Dendritic cell treated with granulocyte-macrophage colony-stimulating factor and Interleukin-4, amounts not matched to agents 40 ng/mL and 50 ng/mL, for 4 days (primary cell): ENCODE measurements at regions of chr19 and their contacts with region 1.

Region 1: DNA sequence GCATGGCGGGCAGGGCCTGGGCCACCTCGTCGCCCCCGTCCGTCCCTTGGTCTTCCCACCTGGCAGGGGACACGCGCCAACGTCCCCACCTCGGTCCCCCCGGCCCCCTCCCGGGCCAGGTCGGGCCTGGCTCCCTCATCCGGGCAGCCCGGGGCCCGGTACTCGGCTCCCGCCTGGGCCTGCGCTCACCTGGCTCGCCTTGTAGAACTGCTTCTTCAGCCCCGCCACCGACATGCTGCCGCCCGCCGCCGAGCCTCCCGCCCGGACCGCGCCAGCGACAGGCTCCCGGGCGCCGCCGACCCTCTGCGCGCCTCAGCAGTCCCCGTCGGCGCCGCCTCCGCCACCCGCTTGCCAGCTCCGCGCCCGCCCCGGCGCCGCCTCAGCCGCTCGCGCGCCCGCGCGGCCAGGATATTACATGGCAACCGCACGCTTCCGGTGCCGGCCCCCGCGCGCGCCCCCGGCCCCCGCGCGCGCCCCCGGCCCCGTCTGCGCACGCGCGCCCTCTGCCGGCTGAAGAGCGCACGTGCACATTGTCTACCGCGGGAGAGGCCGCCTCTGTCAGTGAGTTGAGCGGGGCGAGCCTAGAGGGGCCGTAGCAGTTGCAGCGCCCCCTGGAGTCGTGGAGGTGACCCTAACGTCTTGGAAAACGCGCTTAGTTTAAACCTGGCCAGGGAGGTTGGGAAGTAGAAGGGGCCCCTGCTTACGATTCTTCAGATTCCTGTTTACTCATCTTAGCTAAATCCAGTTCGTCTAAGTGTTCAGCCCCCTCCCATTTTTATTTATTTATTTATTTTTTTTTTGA is at the start of gene SH3GL1:
- H3K4me3 Mint-ChIP-seq: peak within 1 kb of the TSS; percentile 96
- H3K27ac Mint-ChIP-seq: peak within 1 kb of the TSS; percentile 93
- H3K4me1 Mint-ChIP-seq: peaks cover 63% of the 10 kb centered on the region
- H3K27me3 Mint-ChIP-seq: no peaks in the 10 kb centered on the region

Region 2: GRCh38 chr19:4369888-4370260 is 30.5 kb before region 1 on chr19:
- intact Hi-C with region 1: loop called (anchors 1 kb)
- H3K4me3 Mint-ChIP-seq: peak overlapping the region; percentile 67
- H3K27ac Mint-ChIP-seq: peak overlapping the region; percentile 91
- H3K4me1 Mint-ChIP-seq: peaks cover 93% of the 10 kb centered on the region
- H3K27me3 Mint-ChIP-seq: no peaks in the 10 kb centered on the region

Region 3: DNA sequence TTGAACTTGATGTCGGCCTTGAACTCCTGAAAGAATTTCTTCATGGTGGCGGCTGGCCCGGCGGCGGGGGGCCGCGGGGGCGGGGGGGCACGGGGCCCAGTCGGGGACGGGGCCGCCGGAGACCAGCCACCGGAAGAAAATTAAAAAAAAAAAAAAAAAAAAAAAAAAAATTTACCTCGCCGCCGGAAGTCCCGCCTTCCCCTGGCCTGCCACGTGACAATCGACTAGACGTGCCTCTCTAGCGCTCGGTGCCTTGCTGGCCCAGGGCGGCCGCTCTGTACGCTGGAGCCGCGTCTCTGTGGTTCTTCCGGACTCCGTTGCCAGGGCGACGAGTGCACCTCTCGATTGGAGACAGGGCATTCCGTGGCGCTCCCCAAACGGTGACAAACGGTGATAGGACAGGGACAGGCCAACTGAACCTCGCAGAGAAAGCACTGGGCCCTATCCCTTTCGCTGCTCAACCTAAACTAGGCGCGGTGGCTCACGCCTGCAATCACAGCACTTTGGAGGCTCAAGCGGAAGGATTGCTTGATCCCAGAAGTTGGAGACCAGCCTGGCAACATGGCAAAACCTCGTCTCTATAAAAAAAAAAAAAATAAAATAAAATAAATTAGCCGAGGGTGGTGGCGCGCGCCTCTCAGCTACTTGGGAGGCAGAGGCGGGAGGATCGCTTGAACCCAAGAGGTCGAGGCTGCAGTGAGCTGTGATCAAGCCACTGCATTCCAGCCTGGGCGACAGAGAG is 57.5 kb after region 1 on chr19 and contains the start of gene UBXN6:
- intact Hi-C with region 1: loop called (anchors 2 kb)
- H3K4me3 Mint-ChIP-seq: peak within 1 kb of the TSS; percentile 89
- H3K27ac Mint-ChIP-seq: peak within 1 kb of the TSS; percentile 87
- H3K4me1 Mint-ChIP-seq: peaks cover 40% of the 10 kb centered on the region
- H3K27me3 Mint-ChIP-seq: no peaks in the 10 kb centered on the region